ENCODE measurements at regions of chr12 and their contacts with region 1.

Region 1: DNA sequence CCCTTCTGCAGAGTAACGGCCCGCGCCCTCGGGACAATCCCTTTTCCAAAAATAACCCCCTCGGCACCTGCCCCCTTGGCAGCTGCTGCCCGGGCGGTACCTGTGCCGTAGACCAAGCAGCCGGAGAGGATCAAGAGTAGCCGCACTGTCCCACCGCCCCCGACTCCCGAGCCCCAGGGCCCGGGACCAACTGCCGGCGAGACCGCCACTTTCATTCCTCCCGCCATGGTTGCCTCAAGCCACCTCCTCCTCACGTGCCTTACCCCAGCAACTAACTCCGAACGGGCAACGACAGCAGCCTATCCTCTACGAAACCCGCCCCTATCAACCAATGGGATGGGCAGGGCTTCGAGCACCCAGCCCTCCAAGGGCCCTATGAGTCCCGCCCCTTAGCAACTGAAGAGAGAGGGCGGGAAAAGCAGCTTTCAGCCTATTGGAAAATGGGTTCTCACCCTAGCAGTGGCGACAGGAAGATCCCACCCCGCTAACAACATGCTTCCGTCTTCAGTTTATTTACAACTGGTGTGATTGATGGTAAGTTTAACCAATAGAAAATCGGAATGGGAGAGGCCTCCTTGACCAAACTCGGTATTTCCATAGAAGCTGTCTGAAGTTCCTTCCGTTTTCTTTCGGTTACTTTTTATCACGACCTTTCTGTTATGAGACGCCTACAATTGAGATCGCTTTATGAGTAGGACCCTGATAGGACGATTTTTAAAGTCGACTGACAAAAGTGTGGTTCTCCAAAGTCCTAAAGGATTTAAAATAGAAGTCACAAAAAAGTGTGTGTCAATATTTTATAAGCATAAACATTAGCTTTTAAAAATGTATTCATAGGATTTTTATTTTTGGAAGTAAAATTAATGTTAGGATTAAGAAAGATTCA is at the start of gene NEMP1:
- DNase-seq: peak; percentile 100
- H3K4me3 Mint-ChIP-seq: peak within 1 kb of the TSS; percentile 100
- H3K27ac Mint-ChIP-seq: peak within 1 kb of the TSS; percentile 97
- H3K4me1 Mint-ChIP-seq: no peaks in the 10 kb centered on the region
- H3K27me3 Mint-ChIP-seq: no peaks in the 10 kb centered on the region
- CTCF ChIP-seq: no peak
- total RNA-seq, gene NEMP1: 17.5 and 22.5 TPM in 2 replicates

Region 2: GRCh38 chr12:56851462-56851861 is 227.3 kb before region 1 on chr12:
- CTCF ChIA-PET with region 1: no interaction called
- POLR2A ChIA-PET with region 1: no interaction called
- intact Hi-C with region 1: no loop called
- DNase-seq: no peak
- H3K4me3 Mint-ChIP-seq: no peak overlapping the region
- H3K27ac Mint-ChIP-seq: no peak overlapping the region
- H3K4me1 Mint-ChIP-seq: no peaks in the 10 kb centered on the region
- H3K27me3 Mint-ChIP-seq: no peaks in the 10 kb centered on the region
- CTCF ChIP-seq: no peak

Region 3: GRCh38 chr12:57096099-57096572 is 17.4 kb after region 1 on chr12:
- CTCF ChIA-PET with region 1: interaction called, 7 read pairs
- POLR2A ChIA-PET with region 1: interaction called, 151 read pairs
- intact Hi-C with region 1: no loop called
- DNase-seq: peak; percentile 95
- H3K4me3 Mint-ChIP-seq: no peak overlapping the region
- H3K27ac Mint-ChIP-seq: peak overlapping the region; percentile 78
- H3K4me1 Mint-ChIP-seq: peaks cover 51% of the 10 kb centered on the region
- H3K27me3 Mint-ChIP-seq: no peaks in the 10 kb centered on the region
- CTCF ChIP-seq: no peak